A549 (cell line): ENCODE measurements at regions of chr19 and their contacts with region 1.

Region 1: GRCh38 chr19:41951686-41952172 is 7.4 kb downstream of the RABAC1 start:
- DNase-seq: peak; percentile 87 to 99
- ATAC-seq: peak; percentile 86 to 95
- H3K4me3 ChIP-seq: no peak overlapping the region
- H3K27ac ChIP-seq: 0 out of 6 replicates have a peak overlapping the region, but pooled peaks of 1 of the 2 experiments have one; percentile 41
- H3K4me1 ChIP-seq: no peaks in the 10 kb centered on the region
- CTCF ChIP-seq: peak; percentile 99
- EP300 ChIP-seq: no peak
- POLR2A ChIP-seq: no peak
- RAD21 ChIP-seq: peak; percentile 92 to 97

Region 2: DNA sequence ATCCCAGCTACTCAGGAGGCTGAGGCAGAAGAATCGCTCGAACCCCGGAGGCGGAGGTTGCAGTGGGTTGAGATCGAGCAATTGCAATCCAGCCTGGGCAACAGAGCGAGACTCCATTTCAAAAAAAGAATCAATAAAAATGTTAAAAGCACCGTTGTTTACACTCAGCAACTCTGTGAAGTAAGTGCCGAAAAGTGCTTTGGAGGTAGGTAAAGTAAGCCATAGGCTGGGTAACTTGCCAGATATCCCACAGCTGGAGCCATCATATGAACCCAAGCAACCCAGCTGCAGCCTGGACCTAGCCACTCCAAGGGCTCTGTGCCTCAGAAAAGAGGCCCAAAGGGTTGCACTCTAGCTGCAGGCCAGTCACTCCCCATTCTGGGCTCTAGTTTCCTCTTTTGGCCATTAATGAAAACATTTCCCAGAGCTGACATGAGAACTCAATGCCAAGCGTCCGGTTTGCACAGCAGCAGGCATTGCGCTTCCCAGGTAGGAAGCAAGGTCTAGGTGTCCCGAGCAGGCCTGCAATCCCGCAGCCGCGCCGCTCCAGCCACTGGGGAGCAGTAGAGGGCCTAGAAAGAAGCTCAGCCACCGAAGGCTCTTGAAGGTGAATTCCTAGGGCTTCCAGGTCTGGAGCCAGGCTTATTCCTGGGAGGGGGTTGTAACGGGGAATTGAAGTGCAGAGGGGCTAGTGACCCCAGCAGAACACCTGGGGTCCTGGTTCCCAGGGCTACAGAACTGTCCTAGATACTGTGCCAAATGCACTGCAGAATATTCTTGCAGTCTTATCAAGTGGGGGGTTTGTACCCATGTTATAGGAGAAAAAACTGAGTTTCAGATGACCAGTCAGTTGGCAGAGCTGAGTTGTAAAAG is 78.7 kb before region 1 on chr19:
- CTCF ChIA-PET with region 1: interaction called, 87 read pairs
- POLR2A ChIA-PET with region 1: interaction called, 3 read pairs
- DNase-seq: peak; percentile 90 to 94
- ATAC-seq: peak; percentile 63 to 79
- H3K4me3 ChIP-seq: no peak overlapping the region
- H3K27ac ChIP-seq: no peak overlapping the region
- H3K4me1 ChIP-seq: peaks cover 35% of the 10 kb centered on the region
- CTCF ChIP-seq: peak; percentile 94
- EP300 ChIP-seq: no peak
- POLR2A ChIP-seq: no peak
- RAD21 ChIP-seq: peak; percentile 87

Region 3: GRCh38 chr19:41893899-41894298 is 57.8 kb before region 1 on chr19:
- CTCF ChIA-PET with region 1: interaction called, 17 read pairs
- POLR2A ChIA-PET with region 1: no interaction called
- DNase-seq: peak in 1 of 2 experiments; percentile 87
- ATAC-seq: peak; percentile 25 to 63
- H3K4me3 ChIP-seq: no peak overlapping the region
- H3K27ac ChIP-seq: peak overlapping the region in 1 of 2 experiments; percentile 42; a peak in 1 of 6 replicates
- H3K4me1 ChIP-seq: peaks cover 14% of the 10 kb centered on the region; the same call in 2 of the 3 replicates
- CTCF ChIP-seq: no peak
- EP300 ChIP-seq: no peak
- POLR2A ChIP-seq: no peak
- RAD21 ChIP-seq: no peak

Region 4: GRCh38 chr19:41934849-41935374 is 16.8 kb before region 1 on chr19:
- CTCF ChIA-PET with region 1: interaction called, 163 read pairs
- POLR2A ChIA-PET with region 1: no interaction called
- DNase-seq: peak; percentile 80 to 96
- ATAC-seq: peak; percentile 48 to 88
- H3K4me3 ChIP-seq: no peak overlapping the region
- H3K27ac ChIP-seq: no peak overlapping the region
- H3K4me1 ChIP-seq: 0 out of 3 replicates have a peak, but pooled peaks cover 3% of the 10 kb centered on the region
- CTCF ChIP-seq: peak; percentile 96
- EP300 ChIP-seq: no peak
- POLR2A ChIP-seq: no peak
- RAD21 ChIP-seq: peak; percentile 77 to 90

Region 5: GRCh38 chr19:41967054-41967783 is 15.5 kb after region 1 on chr19:
- CTCF ChIA-PET with region 1: interaction called, 14 read pairs
- POLR2A ChIA-PET with region 1: no interaction called
- DNase-seq: no peak
- ATAC-seq: peak; percentile 12 to 31; a peak in 4 of 6 replicates
- H3K4me3 ChIP-seq: no peak overlapping the region
- H3K27ac ChIP-seq: no peak overlapping the region
- H3K4me1 ChIP-seq: no peaks in the 10 kb centered on the region
- CTCF ChIP-seq: no peak
- EP300 ChIP-seq: no peak
- POLR2A ChIP-seq: no peak
- RAD21 ChIP-seq: no peak